ENCODE measurements at regions of chr15 and their contacts with region 1.

Region 1: DNA sequence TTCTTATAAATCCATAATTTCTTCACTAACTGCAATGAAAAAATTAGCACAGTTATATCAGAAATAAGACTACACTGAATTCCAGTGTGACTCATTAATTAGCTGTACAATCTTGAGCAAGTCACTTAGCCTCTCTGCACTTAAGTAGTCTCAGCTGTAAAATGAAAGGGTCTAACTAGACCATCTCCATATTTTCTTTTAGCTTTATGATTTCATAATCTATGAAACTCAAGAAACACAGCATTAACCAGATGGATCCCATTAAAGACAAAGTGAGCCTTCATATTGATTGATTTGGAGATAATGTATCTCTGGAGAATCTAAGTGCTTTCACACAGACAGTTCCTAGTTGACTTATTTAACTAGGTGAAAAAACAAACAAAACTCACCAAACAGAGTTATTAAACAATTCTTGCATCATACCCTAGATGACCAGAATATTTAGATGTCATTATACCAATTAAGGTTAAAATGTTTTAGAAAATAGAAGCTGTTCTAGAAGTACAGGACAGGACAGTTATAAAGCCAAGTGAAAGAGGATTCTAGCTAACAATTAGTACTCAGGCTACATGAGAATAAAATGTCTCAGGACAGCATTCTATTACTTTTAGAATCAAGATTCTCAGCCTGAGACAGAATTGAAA is 11.2 kb downstream of the CSNK1G1 start:
- DNase-seq: peak; percentile 26
- ATAC-seq: peak; percentile 27; the same call in 1 of the 2 replicates
- H3K4me3 ChIP-seq: no peak overlapping the region
- H3K27ac ChIP-seq: peak overlapping the region; percentile 49; the same call in 1 of the 2 replicates
- H3K4me1 ChIP-seq: peaks cover 11% of the 10 kb centered on the region
- H3K27me3 ChIP-seq: no peaks in the 10 kb centered on the region
- CTCF ChIP-seq: no peak
- POLR2A ChIP-seq: no peak
- RAD21 ChIP-seq: no peak

Region 2: DNA sequence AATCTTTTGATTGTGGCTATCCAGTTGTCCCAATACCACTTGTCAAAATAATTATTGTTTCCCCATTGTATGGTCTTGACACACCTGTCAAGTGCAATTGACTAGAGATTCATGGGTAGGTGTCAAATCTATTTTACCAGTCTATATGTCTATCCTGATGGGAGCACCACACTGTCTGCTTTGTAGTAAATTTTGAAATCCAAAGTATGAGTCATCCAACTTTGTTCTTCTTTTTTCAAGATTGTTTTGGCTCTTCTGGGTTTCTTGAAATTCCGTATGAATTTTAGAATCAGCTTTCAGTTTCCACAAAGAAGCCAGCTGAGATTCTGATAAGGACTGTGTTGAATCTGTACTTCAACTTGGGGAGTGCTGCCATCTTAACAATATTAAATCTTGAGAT is 60.7 kb before region 1 on chr15:
- CTCF ChIA-PET with region 1: no interaction called
- POLR2A ChIA-PET with region 1: no interaction called
- dilution Hi-C with region 1: no loop called
- in situ Hi-C with region 1: no loop called
- intact Hi-C with region 1: loop called (anchors 10 kb)
- DNase-seq: peak; percentile 68
- ATAC-seq: peak; percentile 59
- H3K4me3 ChIP-seq: no peak overlapping the region
- H3K27ac ChIP-seq: no peak overlapping the region
- H3K4me1 ChIP-seq: peaks cover 6% of the 10 kb centered on the region
- H3K27me3 ChIP-seq: no peaks in the 10 kb centered on the region
- CTCF ChIP-seq: no peak
- POLR2A ChIP-seq: no peak
- RAD21 ChIP-seq: no peak

Region 3: DNA sequence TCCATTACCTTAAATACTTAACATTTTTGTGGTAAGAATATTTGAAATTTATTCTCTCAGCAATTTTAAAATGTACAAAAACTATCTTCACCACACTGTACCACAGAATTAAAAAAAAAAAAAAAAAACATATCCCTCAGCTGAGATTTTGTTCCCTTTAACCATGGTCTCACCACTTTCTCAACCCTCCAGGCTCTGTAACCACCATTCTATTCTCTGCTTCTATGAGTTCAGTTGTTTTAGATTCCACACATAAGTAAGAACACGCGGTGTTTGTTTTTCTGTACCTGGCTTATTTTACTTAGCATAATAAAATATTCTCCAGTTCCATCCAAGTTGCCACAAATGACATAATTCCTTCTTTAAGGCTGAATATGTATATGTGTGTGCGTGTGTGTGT is 30.3 kb before region 1 on chr15:
- CTCF ChIA-PET with region 1: interaction called, 3 read pairs
- POLR2A ChIA-PET with region 1: no interaction called
- dilution Hi-C with region 1: no loop called
- in situ Hi-C with region 1: no loop called
- intact Hi-C with region 1: loop called (anchors 5 kb)
- DNase-seq: peak; percentile 28
- ATAC-seq: peak; percentile 46
- H3K4me3 ChIP-seq: no peak overlapping the region
- H3K27ac ChIP-seq: no peak overlapping the region
- H3K4me1 ChIP-seq: peaks cover 2% of the 10 kb centered on the region
- H3K27me3 ChIP-seq: no peaks in the 10 kb centered on the region
- CTCF ChIP-seq: no peak
- POLR2A ChIP-seq: no peak
- RAD21 ChIP-seq: no peak

Region 4: DNA sequence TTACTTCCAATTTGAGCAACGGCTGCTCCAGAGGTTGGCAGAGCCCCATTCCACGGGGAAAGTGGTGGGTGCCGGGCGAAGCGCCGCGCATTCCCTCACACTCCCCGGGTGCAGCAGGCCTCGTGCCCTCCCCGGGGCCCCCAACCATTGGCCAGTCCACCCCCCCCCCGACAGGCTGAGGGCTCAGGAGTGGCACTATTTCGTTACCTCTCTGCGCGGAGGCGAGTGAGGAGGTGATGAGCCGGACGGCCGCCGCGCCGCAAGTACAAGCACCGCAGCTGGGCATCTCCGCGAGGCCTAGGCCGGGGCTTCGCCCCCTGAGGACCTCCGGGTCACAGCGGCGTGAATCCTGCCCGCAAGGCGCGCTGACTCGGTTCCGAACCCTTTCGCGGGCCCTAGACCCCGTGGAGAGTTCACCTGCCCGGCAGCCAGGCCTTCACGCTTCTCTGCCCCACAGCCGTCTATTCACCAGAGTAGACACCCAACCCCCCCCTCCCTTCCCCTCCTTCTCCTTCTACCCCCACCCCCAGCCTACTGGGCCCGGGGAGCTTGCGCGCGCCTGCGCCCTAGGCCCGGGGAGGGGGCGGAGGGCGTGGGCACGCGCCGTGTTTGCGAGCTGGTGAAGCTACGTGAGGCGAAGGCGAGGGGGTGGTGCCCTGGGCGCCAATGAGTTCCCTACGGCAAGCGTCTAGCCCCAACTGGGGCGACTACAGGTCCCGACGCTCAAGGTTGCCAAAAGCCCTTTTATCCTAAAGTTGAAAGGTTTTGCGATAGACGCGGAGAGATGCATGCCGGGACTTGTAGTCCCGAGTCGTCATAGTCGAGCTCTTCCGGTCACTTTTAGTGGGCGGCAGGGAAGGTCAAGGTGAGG is 840.3 kb after region 1 on chr15 and contains the start of gene CLPX:
- CTCF ChIA-PET with region 1: no interaction called
- POLR2A ChIA-PET with region 1: no interaction called
- dilution Hi-C with region 1: no loop called
- in situ Hi-C with region 1: no loop called
- intact Hi-C with region 1: no loop called
- DNase-seq: peak; percentile 89
- ATAC-seq: peak; percentile 91
- H3K4me3 ChIP-seq: peak within 1 kb of the TSS; percentile 87
- H3K27ac ChIP-seq: peak within 1 kb of the TSS; percentile 94
- H3K4me1 ChIP-seq: no peaks in the 10 kb centered on the region
- H3K27me3 ChIP-seq: no peaks in the 10 kb centered on the region
- CTCF ChIP-seq: no peak
- POLR2A ChIP-seq: peak; percentile 76
- RAD21 ChIP-seq: no peak
- total RNA-seq, gene CLPX: 25.8 and 29.4 TPM in 2 replicates